ENCODE measurements at regions of chr6 and their contacts with region 1.

Region 1: DNA sequence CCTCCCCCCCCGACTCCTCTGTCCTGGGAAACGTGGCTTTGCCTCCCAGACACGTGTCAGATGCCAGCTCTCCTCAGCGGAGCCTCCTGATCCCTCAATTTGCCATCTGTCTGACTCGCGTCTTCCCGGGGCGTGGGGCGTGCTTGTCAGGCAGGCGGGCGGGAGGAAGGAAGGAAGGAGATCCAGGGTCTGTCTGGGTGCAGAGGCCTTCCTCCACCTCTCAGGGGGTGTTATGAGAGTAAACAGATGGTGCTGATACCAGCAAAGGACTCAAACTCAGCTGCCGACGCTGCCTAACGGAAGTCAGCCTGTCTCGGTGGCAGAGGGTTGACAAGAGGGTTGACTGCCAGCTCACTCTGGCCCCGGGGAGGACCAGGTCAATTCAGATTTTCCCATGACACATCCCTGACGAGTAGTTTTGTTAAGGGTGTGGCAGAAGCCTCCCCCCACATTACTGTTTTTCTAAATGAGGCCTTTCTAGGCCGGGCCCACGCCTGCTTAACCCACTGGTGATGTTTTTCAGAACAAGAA is 17.0 kb downstream of the UQCC2 start:
- DNase-seq: peak; percentile 86
- H3K4me3 Mint-ChIP-seq: peak overlapping the region; percentile 4
- H3K27ac Mint-ChIP-seq: peak overlapping the region; percentile 86
- H3K4me1 Mint-ChIP-seq: peaks cover 80% of the 10 kb centered on the region
- H3K27me3 Mint-ChIP-seq: no peaks in the 10 kb centered on the region

Region 2: GRCh38 chr6:33425668-33426577 is 268.5 kb before region 1 on chr6:
- CTCF ChIA-PET with region 1: no interaction called
- intact Hi-C with region 1: loop called (anchors 5 kb)
- DNase-seq: peak; percentile 93
- H3K4me3 Mint-ChIP-seq: peak overlapping the region; percentile 87
- H3K27ac Mint-ChIP-seq: peak overlapping the region; percentile 88
- H3K4me1 Mint-ChIP-seq: peaks cover 59% of the 10 kb centered on the region
- H3K27me3 Mint-ChIP-seq: no peaks in the 10 kb centered on the region

Region 3: DNA sequence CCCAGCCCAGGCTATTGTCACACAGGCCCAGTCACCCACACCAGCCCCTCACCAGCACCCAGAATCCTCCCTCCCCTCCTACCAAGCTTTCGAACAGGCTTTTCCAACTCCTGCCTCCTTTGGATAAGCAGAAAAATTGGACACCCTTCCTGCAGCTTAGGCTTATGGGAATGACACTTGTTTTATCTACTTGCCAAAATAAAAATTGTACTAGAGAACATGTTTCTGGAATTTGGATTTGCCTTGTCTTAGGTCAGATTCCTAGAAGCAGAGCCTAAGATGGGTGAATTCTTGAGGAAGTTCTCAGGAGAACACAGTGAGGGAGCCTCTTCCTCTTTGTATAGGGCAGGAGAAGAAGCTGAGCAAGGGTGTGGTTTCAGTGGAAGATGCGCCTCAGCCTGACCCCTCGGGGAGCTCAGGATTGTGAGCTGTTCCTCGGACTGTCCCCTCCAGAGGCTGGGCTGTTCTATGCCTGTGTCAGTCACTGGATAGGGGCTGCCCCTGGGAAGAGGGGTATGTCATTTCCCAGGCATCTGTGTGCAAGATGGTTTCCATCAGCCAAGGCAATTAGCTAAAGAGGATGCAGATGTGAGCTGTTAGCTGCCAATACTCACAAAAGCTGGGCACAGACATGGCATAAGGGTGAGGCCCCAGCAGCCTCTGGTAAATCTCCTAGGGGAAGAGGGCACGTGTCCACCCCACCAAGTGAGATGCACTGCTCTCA is 39.5 kb before region 1 on chr6:
- CTCF ChIA-PET with region 1: no interaction called
- intact Hi-C with region 1: no loop called
- DNase-seq: peak; percentile 15
- H3K4me3 Mint-ChIP-seq: no peak overlapping the region
- H3K27ac Mint-ChIP-seq: peak overlapping the region; percentile 29
- H3K4me1 Mint-ChIP-seq: peaks cover 7% of the 10 kb centered on the region
- H3K27me3 Mint-ChIP-seq: no peaks in the 10 kb centered on the region

Region 4: DNA sequence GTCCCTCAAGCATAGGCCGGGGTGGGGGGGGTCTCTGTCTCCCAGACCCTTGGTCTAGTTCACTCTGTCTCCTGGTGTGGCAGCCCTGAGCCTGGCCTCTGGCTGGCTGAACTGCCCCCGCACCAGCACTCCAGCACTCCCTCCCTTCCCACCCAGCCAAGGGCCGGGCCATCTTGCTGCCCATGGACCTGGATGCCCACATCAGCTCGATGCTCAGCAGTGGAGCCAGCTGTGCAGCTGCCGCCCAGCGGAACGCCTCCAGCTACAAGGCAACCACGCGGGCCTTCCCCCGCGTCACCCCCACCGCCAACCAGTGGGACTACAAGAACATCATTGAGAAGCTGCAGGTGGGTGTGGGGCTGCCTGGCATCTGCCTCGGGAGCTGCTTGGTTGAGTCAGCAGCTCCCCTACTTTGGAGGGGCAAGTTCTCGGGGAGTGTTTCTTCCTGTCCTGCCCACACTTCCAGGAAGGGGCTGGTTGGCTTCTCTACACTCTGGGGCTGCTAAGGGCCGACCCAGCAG is 11.4 kb before region 1 on chr6:
- CTCF ChIA-PET with region 1: interaction called, 10 read pairs
- intact Hi-C with region 1: no loop called
- DNase-seq: peak; percentile 58
- H3K4me3 Mint-ChIP-seq: no peak overlapping the region
- H3K27ac Mint-ChIP-seq: peak overlapping the region; percentile 61
- H3K4me1 Mint-ChIP-seq: peaks cover 11% of the 10 kb centered on the region
- H3K27me3 Mint-ChIP-seq: no peaks in the 10 kb centered on the region

Measured in activated naive CD4-positive, alpha-beta T cell treated with anti-CD3 and anti-CD28 coated beads for 36 hours (primary cell).